Prostate gland (tissue), 2 donors: ENCODE measurements at regions of chr9 and their contacts with region 1.

Region 1: GRCh38 chr9:129597355-129598088 is 23.4 kb downstream of the C9orf50 start:
- DNase-seq: peak; percentile 66
- H3K4me3 ChIP-seq: peak overlapping the region; percentile 14 to 36
- H3K27ac ChIP-seq: peak overlapping the region; percentile 80 to 93
- H3K4me1 ChIP-seq: peaks cover 9% of the 10 kb centered on the region
- H3K27me3 ChIP-seq: no peaks in the 10 kb centered on the region
- CTCF ChIP-seq: peak in 1 of 4 experiments; percentile 17
- POLR2A ChIP-seq: peak; percentile 22

Region 2: GRCh38 chr9:129557192-129558036 is 40.1 kb before region 1 on chr9:
- intact Hi-C with region 1: loop called (anchors 5 kb)
- DNase-seq: no peak
- H3K4me3 ChIP-seq: no peak overlapping the region
- H3K27ac ChIP-seq: peak overlapping the region; percentile 64 to 66
- H3K4me1 ChIP-seq: no peaks in the 10 kb centered on the region
- H3K27me3 ChIP-seq: no peaks in the 10 kb centered on the region
- CTCF ChIP-seq: no peak
- POLR2A ChIP-seq: no peak